GM12878 (cell line): ENCODE measurements at regions of chr11 and their contacts with region 1.

Region 1: DNA sequence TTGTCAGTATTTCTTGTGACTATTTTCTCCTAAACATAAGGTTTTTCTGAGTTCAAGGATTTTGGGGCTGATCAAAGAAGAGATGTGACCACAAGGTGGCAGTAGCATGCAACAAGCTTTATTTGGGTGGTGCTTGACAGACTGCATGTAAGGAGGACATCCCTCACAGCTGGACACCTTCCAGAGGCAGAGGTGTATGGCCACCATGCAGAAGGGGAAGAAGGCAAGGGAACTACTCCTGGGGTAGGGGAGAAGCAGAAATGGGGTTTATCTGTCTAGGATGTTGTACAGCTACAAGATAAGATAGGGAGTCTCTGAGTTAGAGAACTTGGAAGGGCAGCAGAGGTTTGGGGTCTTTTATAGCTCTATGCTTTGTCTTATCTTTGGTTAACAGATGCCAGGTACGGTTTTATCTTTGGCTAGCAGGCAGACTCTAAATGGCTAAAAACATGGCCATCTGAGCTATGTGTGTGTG is 5.1 kb upstream of the BIRC2 start:
- DNase-seq: peak; percentile 76
- ATAC-seq: peak; percentile 67
- H3K4me3 ChIP-seq: no peak overlapping the region
- H3K27ac ChIP-seq: no peak overlapping the region
- H3K4me1 ChIP-seq: no peaks in the 10 kb centered on the region
- H3K27me3 ChIP-seq: no peaks in the 10 kb centered on the region
- CTCF ChIP-seq: peak; percentile 78 to 84 (median 79)
- EP300 ChIP-seq: no peak
- POLR2A ChIP-seq: no peak
- RAD21 ChIP-seq: peak; percentile 94

Region 2: DNA sequence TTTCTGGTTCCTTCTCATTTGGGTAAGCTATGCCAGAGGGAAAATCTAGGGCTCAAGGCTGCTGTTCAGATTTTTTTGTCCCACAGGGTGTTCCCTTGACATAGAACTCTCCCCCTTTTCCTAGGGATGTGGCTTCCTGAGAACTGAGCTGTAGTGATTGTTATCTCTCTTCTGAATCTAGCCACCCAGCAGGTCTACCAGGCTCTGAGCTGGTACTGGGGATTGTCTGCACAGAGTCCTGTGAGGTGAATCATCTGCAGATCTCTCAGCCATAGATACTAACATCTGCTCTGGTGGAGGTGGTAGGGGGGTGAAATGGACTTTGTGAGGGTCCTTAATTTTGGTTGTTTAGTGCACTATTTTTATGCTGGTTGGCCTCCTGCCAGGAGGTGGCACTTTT is 1045.0 kb before region 1 on chr11:
- CTCF ChIA-PET with region 1: no interaction called
- POLR2A ChIA-PET with region 1: no interaction called
- RAD21 ChIA-PET with region 1: no interaction called
- SMC1A ChIA-PET with region 1: no interaction called
- in situ Hi-C with region 1: no loop called
- intact Hi-C with region 1: no loop called
- DNase-seq: no peak
- ATAC-seq: no peak
- H3K4me3 ChIP-seq: no peak overlapping the region
- H3K27ac ChIP-seq: no peak overlapping the region
- H3K4me1 ChIP-seq: no peaks in the 10 kb centered on the region
- H3K27me3 ChIP-seq: no peaks in the 10 kb centered on the region
- CTCF ChIP-seq: no peak
- EP300 ChIP-seq: no peak
- POLR2A ChIP-seq: no peak
- RAD21 ChIP-seq: no peak

Region 3: DNA sequence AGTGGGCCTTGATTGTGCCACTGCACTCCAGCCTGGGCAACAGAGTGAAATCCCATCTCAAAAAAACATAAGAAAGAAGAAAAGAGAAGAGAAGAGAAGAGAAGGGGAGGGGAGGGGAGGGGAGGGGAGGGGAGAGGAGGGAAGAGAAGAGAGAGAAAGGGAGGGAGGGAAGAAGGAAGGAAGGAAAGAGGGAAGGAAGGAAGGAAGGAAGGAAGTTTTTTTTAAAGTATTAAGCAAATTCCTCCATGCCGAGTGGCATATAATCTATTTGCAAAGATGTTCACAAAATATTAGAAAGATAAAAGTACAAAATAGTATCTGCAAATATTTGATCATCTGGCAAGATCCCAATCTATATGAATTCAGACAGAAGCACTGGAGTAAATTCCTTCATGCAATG is 305.1 kb before region 1 on chr11:
- CTCF ChIA-PET with region 1: no interaction called
- POLR2A ChIA-PET with region 1: no interaction called
- RAD21 ChIA-PET with region 1: no interaction called
- SMC1A ChIA-PET with region 1: no interaction called
- in situ Hi-C with region 1: no loop called
- intact Hi-C with region 1: no loop called
- DNase-seq: no peak
- ATAC-seq: no peak
- H3K4me3 ChIP-seq: no peak overlapping the region
- H3K27ac ChIP-seq: no peak overlapping the region
- H3K4me1 ChIP-seq: no peaks in the 10 kb centered on the region
- H3K27me3 ChIP-seq: no peaks in the 10 kb centered on the region
- CTCF ChIP-seq: no peak
- EP300 ChIP-seq: no peak
- POLR2A ChIP-seq: no peak
- RAD21 ChIP-seq: no peak

Region 4: DNA sequence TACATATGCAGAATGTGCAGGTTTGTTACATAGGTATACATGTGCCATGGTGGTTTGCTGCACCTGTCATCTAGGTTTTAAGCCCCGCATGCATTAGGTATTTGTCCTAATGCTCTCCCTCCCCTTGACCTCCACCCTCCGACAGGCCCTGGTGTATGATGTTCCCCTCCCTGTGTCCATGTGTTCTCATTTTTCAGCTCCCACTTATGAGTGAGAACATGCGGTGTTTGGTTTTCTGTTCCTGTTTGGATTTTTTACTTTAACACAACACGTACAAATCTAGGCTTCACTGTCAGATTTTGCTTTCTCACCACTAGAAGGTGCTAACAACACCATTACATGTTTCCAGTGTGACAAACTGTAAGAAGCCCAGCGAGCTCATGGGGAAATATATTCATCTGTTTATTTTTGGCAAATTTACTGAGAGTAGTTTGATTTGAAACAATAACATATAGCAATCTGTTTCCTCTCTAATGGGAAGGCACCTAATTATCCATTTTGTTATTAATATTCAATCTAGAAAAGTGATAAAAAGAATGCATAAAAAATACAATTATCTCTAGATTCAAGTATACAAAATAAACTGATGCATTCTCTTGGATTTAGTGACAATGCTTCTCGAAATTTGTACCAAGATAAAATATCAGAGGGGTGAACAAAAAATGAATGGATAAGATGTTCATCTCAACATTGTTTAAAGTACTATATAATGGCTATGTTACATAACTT is 47.8 kb before region 1 on chr11:
- CTCF ChIA-PET with region 1: interaction called, 234 read pairs
- POLR2A ChIA-PET with region 1: interaction called, 4 read pairs
- RAD21 ChIA-PET with region 1: interaction called, 54 read pairs
- SMC1A ChIA-PET with region 1: interaction called, 46 read pairs
- in situ Hi-C with region 1: loop called (anchors 5 kb)
- intact Hi-C with region 1: no loop called
- DNase-seq: no peak
- ATAC-seq: peak; percentile 96
- H3K4me3 ChIP-seq: no peak overlapping the region
- H3K27ac ChIP-seq: 0 out of 2 replicates have a peak overlapping the region, but pooled peaks have one; percentile 8
- H3K4me1 ChIP-seq: peaks cover 12% of the 10 kb centered on the region
- H3K27me3 ChIP-seq: no peaks in the 10 kb centered on the region
- CTCF ChIP-seq: peak; percentile 77 to 81 (median 79)
- EP300 ChIP-seq: no peak
- POLR2A ChIP-seq: no peak
- RAD21 ChIP-seq: peak; percentile 84

Region 5: GRCh38 chr11:102367364-102367763 is 25.5 kb after region 1 on chr11:
- CTCF ChIA-PET with region 1: interaction called, 17 read pairs
- POLR2A ChIA-PET with region 1: interaction called, 3 read pairs
- RAD21 ChIA-PET with region 1: interaction called, 22 read pairs
- SMC1A ChIA-PET with region 1: interaction called, 17 read pairs
- in situ Hi-C with region 1: no loop called
- intact Hi-C with region 1: no loop called
- DNase-seq: no peak
- ATAC-seq: peak; percentile 58
- H3K4me3 ChIP-seq: no peak overlapping the region
- H3K27ac ChIP-seq: no peak overlapping the region
- H3K4me1 ChIP-seq: peaks cover 11% of the 10 kb centered on the region; the same call in 1 of the 2 replicates
- H3K27me3 ChIP-seq: no peaks in the 10 kb centered on the region
- CTCF ChIP-seq: peak; percentile 2 to 25 (median 17); a peak in 2 of 6 replicates
- EP300 ChIP-seq: no peak
- POLR2A ChIP-seq: no peak
- RAD21 ChIP-seq: peak; percentile 40; the same call in 1 of the 2 replicates

Region 6: GRCh38 chr11:102476812-102477211 is 134.9 kb after region 1 on chr11:
- CTCF ChIA-PET with region 1: interaction called, 16 read pairs
- POLR2A ChIA-PET with region 1: no interaction called
- RAD21 ChIA-PET with region 1: interaction called, 4 read pairs
- SMC1A ChIA-PET with region 1: interaction called, 6 read pairs
- in situ Hi-C with region 1: no loop called
- intact Hi-C with region 1: no loop called
- DNase-seq: no peak
- ATAC-seq: peak; percentile 29
- H3K4me3 ChIP-seq: no peak overlapping the region
- H3K27ac ChIP-seq: no peak overlapping the region
- H3K4me1 ChIP-seq: peaks cover 22% of the 10 kb centered on the region
- H3K27me3 ChIP-seq: no peaks in the 10 kb centered on the region
- CTCF ChIP-seq: no peak
- EP300 ChIP-seq: no peak
- POLR2A ChIP-seq: no peak
- RAD21 ChIP-seq: no peak

Region 7: DNA sequence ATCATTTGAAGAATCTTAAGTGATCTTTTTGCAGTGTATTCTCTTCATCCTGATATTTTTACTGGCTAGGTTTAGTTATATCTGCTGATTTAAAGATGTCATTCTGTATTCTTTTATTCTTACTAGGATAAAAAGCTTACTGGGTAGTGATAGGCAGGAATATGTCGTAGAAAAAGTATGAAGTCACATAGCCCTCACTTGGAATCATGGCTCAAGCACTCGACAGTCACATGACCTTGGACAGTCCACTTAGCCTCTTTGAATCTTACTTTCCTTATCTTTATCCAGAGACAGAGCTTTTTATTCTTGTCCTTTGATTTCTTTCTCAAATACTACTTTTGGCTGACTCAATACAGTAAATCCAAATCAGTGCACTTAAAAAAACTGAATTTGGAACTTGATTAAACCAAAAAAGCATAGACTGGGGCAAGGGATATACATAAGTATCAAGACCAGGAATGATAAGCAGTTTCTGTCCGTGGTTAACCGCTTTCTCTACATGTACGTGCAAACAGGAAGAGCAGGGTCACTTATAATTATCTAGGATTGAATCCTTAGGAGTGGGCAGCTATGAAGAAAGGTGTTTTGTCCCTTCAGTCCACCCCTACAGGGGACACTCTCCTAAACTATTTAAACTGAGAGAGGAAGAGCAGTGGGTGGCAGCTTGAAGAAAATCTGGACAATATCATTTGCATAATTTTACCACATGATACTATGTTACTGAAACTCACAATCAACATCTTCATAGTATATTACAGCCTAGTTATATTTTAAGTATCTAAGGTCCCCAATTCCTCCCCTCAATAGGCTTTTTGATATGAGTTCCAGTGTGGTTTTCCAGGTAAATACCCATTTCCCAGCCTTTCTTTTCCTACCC is 180.7 kb after region 1 on chr11:
- CTCF ChIA-PET with region 1: interaction called, 18 read pairs
- POLR2A ChIA-PET with region 1: no interaction called
- RAD21 ChIA-PET with region 1: interaction called, 8 read pairs
- SMC1A ChIA-PET with region 1: interaction called, 12 read pairs
- in situ Hi-C with region 1: no loop called
- intact Hi-C with region 1: no loop called
- DNase-seq: no peak
- ATAC-seq: peak; percentile 81
- H3K4me3 ChIP-seq: no peak overlapping the region
- H3K27ac ChIP-seq: no peak overlapping the region
- H3K4me1 ChIP-seq: peaks cover 15% of the 10 kb centered on the region
- H3K27me3 ChIP-seq: no peaks in the 10 kb centered on the region
- CTCF ChIP-seq: no peak
- EP300 ChIP-seq: no peak
- POLR2A ChIP-seq: no peak
- RAD21 ChIP-seq: no peak

Region 8: DNA sequence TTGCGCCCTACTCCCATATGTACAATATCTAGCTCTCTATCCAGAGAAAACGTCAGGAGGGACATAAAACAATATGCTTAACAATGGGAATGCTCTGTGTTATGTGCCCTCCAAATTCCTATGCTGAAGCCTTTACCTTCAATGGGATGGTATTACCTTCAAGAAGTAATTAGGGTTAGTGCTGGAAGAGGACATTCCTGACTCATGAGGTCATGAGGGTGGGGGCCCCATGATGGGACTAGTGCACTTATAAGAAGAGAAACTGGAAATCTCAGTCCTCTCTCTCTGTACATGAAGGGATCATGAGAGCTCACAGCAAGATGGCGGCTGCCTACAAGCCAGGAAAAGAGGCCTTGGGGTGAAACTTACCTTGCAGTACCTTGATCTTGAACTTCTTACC is 263.0 kb after region 1 on chr11:
- CTCF ChIA-PET with region 1: interaction called, 9 read pairs
- POLR2A ChIA-PET with region 1: interaction called, 3 read pairs
- RAD21 ChIA-PET with region 1: interaction called, 308 read pairs
- SMC1A ChIA-PET with region 1: interaction called, 242 read pairs
- in situ Hi-C with region 1: loop called (anchors 5 kb)
- intact Hi-C with region 1: no loop called
- DNase-seq: no peak
- ATAC-seq: no peak
- H3K4me3 ChIP-seq: no peak overlapping the region
- H3K27ac ChIP-seq: no peak overlapping the region
- H3K4me1 ChIP-seq: peaks cover 2% of the 10 kb centered on the region; the same call in 1 of the 2 replicates
- H3K27me3 ChIP-seq: no peaks in the 10 kb centered on the region
- CTCF ChIP-seq: no peak
- EP300 ChIP-seq: no peak
- POLR2A ChIP-seq: no peak
- RAD21 ChIP-seq: no peak